CD14-positive monocyte (primary cell): ENCODE measurements at regions of chr16 and their contacts with region 1.

Region 1: GRCh38 chr16:88686439-88687253 is at the start of gene SNAI3:
- DNase-seq: peak; percentile 69 to 78 (median 76)
- H3K4me3 ChIP-seq: peak within 1 kb of the TSS; percentile 71 to 94 (median 89)
- H3K4me3 Mint-ChIP-seq: peak within 1 kb of the TSS; percentile 80 to 86
- H3K27ac ChIP-seq: peak within 1 kb of the TSS; percentile 41 to 77
- H3K27ac Mint-ChIP-seq: peak within 1 kb of the TSS; percentile 54 to 83 (median 58)
- H3K4me1 ChIP-seq: peaks cover 63 to 69% of the 10 kb centered on the region in 2 donors
- H3K4me1 Mint-ChIP-seq: peaks cover 59% of the 10 kb centered on the region
- H3K27me3 ChIP-seq: no peaks in the 10 kb centered on the region
- H3K27me3 Mint-ChIP-seq: peaks cover 13 to 19% (median 15%) of the 10 kb centered on the region in 3 donors
- CTCF ChIP-seq: no peak
- polyA plus RNA-seq, gene SNAI3: 4.2 to 6.4 (median 5.3) TPM

Region 2: GRCh38 chr16:88437373-88437964 is 249.2 kb before region 1 on chr16:
- intact Hi-C with region 1: no loop called
- DNase-seq: peak in 2 of 3 donors; percentile 39 to 41
- H3K4me3 ChIP-seq: no peak overlapping the region
- H3K4me3 Mint-ChIP-seq: no peak overlapping the region
- H3K27ac ChIP-seq: no peak overlapping the region
- H3K27ac Mint-ChIP-seq: no peak overlapping the region
- H3K4me1 ChIP-seq: peaks cover 0 to 2% of the 10 kb centered on the region in 2 donors
- H3K4me1 Mint-ChIP-seq: no peaks in the 10 kb centered on the region
- H3K27me3 ChIP-seq: peaks cover 0 to 8% of the 10 kb centered on the region in 2 donors
- H3K27me3 Mint-ChIP-seq: peaks cover under 1 to 27% (median 2%) of the 10 kb centered on the region in 3 donors
- CTCF ChIP-seq: peak; percentile 96

Region 3: DNA sequence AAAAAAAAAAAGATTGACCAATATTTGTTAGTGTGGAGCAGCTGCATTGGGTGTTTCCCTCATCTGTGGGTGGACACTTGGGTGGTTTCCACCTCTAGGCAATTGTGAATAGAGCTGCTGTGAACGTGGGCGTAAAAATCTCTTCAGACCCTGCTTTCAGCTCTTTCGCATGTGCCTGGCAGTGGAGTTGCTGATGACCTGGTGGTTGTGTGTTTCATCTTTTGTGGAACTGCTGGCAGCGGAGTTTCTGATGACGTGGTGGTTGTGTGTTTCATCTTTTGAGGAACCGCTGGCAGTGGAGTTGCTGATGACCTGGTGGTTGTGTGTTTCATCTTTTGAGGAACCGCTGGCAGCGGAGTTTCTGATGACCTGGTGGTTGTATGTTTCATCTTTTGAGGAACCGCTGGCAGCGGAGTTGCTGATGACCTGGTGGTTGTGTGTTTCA is 95.0 kb before region 1 on chr16:
- intact Hi-C with region 1: loop called in 1 of 2 experiments (anchors 10 kb)
- DNase-seq: peak; percentile 83 to 99 (median 84)
- H3K4me3 ChIP-seq: no peak overlapping the region
- H3K4me3 Mint-ChIP-seq: no peak overlapping the region
- H3K27ac ChIP-seq: peak overlapping the region in 1 of 2 donors; percentile 43
- H3K27ac Mint-ChIP-seq: peak overlapping the region; percentile 68 to 88 (median 81)
- H3K4me1 ChIP-seq: peaks cover 13 to 15% of the 10 kb centered on the region in 2 donors
- H3K4me1 Mint-ChIP-seq: peaks cover 13% of the 10 kb centered on the region
- H3K27me3 ChIP-seq: no peaks in the 10 kb centered on the region
- H3K27me3 Mint-ChIP-seq: no peaks in the 10 kb centered on the region
- CTCF ChIP-seq: no peak

Region 4: GRCh38 chr16:88633684-88634140 is 52.9 kb before region 1 on chr16:
- intact Hi-C with region 1: loop called in 1 of 2 experiments (anchors 10 kb)
- DNase-seq: peak in 2 of 3 donors; percentile 28 to 59
- H3K4me3 ChIP-seq: peak overlapping the region; percentile 40 to 77 (median 44)
- H3K4me3 Mint-ChIP-seq: peak overlapping the region; percentile 69 to 85
- H3K27ac ChIP-seq: no peak overlapping the region
- H3K27ac Mint-ChIP-seq: peak overlapping the region in 2 of 7 donors; percentile 25 to 75
- H3K4me1 ChIP-seq: peaks cover 21 to 26% of the 10 kb centered on the region in 2 donors
- H3K4me1 Mint-ChIP-seq: peaks cover 17% of the 10 kb centered on the region
- H3K27me3 ChIP-seq: peaks cover 4 to 34% of the 10 kb centered on the region in 2 donors
- H3K27me3 Mint-ChIP-seq: peaks cover 28 to 50% (median 35%) of the 10 kb centered on the region in 3 donors
- CTCF ChIP-seq: peak; percentile 46

Region 5: GRCh38 chr16:88650749-88651275 is 35.8 kb before region 1 on chr16 and contains the start of gene CYBA:
- intact Hi-C with region 1: loop called (anchors 2 to 5 kb)
- DNase-seq: peak; percentile 70 to 87 (median 84)
- H3K4me3 ChIP-seq: peak within 1 kb of the TSS; percentile 79 to 100 (median 81)
- H3K4me3 Mint-ChIP-seq: peak within 1 kb of the TSS; percentile 92 to 97
- H3K27ac ChIP-seq: peak within 1 kb of the TSS; percentile 83 to 97
- H3K27ac Mint-ChIP-seq: peak within 1 kb of the TSS; percentile 93 to 96 (median 95)
- H3K4me1 ChIP-seq: peaks cover 45 to 53% of the 10 kb centered on the region in 2 donors
- H3K4me1 Mint-ChIP-seq: peaks cover 32% of the 10 kb centered on the region
- H3K27me3 ChIP-seq: no peaks in the 10 kb centered on the region
- H3K27me3 Mint-ChIP-seq: peaks cover 0 to 2% (median 2%) of the 10 kb centered on the region in 3 donors
- CTCF ChIP-seq: no peak
- polyA plus RNA-seq, gene CYBA: 1,168 to 2,376 (median 2,092) TPM

Region 6: GRCh38 chr16:88662843-88663606 is 23.6 kb before region 1 on chr16 and contains the start of gene MVD:
- intact Hi-C with region 1: loop called in 1 of 2 experiments (anchors 2 kb)
- DNase-seq: peak; percentile 97 to 98 (median 98)
- H3K4me3 ChIP-seq: peak within 1 kb of the TSS; percentile 69 to 87 (median 81)
- H3K4me3 Mint-ChIP-seq: peak within 1 kb of the TSS; percentile 83 to 91
- H3K27ac ChIP-seq: peak within 1 kb of the TSS; percentile 20 to 93
- H3K27ac Mint-ChIP-seq: peak within 1 kb of the TSS; percentile 83 to 98 (median 92)
- H3K4me1 ChIP-seq: peaks cover 20 to 21% of the 10 kb centered on the region in 2 donors
- H3K4me1 Mint-ChIP-seq: peaks cover 19% of the 10 kb centered on the region
- H3K27me3 ChIP-seq: no peaks in the 10 kb centered on the region
- H3K27me3 Mint-ChIP-seq: peaks cover 0 to 3% (median 3%) of the 10 kb centered on the region in 3 donors
- CTCF ChIP-seq: no peak
- polyA plus RNA-seq, gene MVD: 9.0 to 17.9 (median 12.2) TPM

Region 7: DNA sequence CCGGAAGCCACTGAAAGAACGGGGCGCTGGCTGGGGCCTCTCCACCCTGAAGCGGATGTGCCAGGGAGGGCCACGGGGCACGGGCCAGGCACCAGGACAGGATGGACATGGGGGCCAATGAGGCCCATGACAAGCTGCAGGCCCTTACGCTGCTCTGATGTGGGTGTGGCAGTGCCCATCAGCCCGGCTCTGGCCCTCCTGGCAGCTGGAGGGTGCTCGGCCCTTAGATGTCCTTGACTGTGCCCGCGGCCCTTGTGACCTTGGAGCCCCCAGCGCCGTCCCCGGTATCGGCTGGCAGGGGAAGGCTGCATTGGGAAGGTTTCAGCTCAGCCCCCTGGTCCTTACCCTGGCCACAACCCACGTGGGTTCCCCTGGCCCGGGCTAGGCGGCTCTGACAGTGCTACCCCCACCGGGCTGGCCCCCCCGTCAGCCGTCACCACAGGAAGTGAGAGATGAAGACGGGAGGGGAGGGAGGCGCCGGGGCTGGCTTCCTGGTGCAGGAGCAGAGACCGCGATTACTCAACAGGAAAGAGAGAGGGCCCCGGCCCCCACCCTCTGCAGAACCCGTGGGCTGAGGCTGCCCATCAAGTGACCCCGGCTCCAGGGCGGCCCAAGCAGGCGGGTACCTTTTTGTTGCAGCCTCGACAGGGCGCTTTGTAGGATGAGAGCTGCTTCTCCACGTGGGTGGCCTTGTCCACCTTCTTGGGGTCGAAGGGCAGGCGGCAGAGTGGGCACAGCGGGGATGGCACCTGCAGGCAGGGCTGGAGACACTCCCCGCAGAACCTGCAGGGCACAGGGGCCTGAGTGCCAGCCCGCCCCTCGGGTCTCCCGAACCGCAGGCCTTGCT is 14.2 kb after region 1 on chr16:
- intact Hi-C with region 1: loop called in 1 of 2 experiments (anchors 1 kb)
- DNase-seq: peak; percentile 97 to 98 (median 98)
- H3K4me3 ChIP-seq: peak overlapping the region; percentile 2 to 96 (median 93)
- H3K4me3 Mint-ChIP-seq: peak overlapping the region; percentile 65 to 99
- H3K27ac ChIP-seq: peak overlapping the region; percentile 84 to 88
- H3K27ac Mint-ChIP-seq: peak overlapping the region; percentile 91 to 99 (median 98)
- H3K4me1 ChIP-seq: peaks cover 62 to 67% of the 10 kb centered on the region in 2 donors
- H3K4me1 Mint-ChIP-seq: peaks cover 57% of the 10 kb centered on the region
- H3K27me3 ChIP-seq: no peaks in the 10 kb centered on the region
- H3K27me3 Mint-ChIP-seq: peaks cover 0 to 4% (median 2%) of the 10 kb centered on the region in 3 donors
- CTCF ChIP-seq: no peak